ENCODE measurements at regions of chr14 and their contacts with region 1.

Region 1: GRCh38 chr14:68444449-68445168 is 348.3 kb downstream of the ZFP36L1 start:
- DNase-seq: peak; percentile 64
- ATAC-seq: peak; percentile 44
- H3K4me3 ChIP-seq: no peak overlapping the region
- H3K27ac ChIP-seq: no peak overlapping the region
- H3K4me1 ChIP-seq: peaks cover 42% of the 10 kb centered on the region
- H3K27me3 ChIP-seq: no peaks in the 10 kb centered on the region
- CTCF ChIP-seq: no peak

Region 2: GRCh38 chr14:68408680-68409079 is 35.9 kb before region 1 on chr14:
- CTCF ChIA-PET with region 1: no interaction called
- POLR2A ChIA-PET with region 1: no interaction called
- intact Hi-C with region 1: loop called (anchors 1 kb)
- DNase-seq: peak; percentile 63
- ATAC-seq: peak; percentile 59
- H3K4me3 ChIP-seq: no peak overlapping the region
- H3K27ac ChIP-seq: peak overlapping the region; percentile 22; the same call in 1 of the 2 replicates
- H3K4me1 ChIP-seq: peaks cover 56% of the 10 kb centered on the region
- H3K27me3 ChIP-seq: no peaks in the 10 kb centered on the region
- CTCF ChIP-seq: peak; percentile 63

Region 3: DNA sequence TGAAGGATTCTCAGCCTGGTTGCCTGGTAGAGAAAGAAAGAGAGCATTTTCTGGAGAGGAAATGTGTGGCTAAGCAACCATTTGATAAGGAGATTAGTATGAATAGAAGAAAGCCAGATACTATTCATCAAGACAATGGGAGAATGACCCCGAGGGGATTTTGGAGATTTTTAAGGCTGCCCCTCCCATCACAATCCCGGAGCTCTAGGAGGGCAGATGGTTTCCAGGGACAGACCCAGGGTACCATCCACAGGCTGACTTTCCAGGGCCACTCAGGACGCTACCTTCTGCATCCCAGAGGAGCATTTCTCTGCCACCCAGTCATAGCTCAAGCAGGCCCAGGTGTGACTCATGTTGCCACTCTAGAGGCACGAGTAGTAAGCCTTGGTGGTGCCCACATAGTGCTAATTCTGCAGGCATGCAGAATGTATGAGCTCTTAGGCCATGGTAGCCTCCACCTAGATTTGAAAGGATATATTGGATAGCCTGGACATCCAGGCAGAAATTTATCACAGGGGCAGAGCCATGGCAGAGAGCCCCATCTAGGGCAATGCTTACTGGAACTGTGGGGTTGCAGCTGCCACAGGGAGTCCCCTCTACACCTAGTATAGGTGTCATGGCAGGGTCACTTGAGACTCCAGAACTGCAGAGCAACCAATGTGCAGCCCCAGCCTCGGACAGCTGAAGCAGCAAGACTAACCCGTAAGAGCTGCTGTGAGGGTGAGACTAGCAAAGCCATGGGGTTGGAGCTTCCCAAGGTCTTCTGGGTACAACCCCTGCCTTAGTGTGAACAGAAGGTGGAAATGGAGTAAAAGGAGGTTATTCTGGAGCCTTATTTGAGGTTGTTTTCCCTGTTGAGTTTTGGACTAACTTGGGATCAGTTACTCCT is 17.7 kb before region 1 on chr14:
- CTCF ChIA-PET with region 1: no interaction called
- POLR2A ChIA-PET with region 1: interaction called, 6 read pairs
- intact Hi-C with region 1: loop called (anchors 1 kb)
- DNase-seq: peak; percentile 45
- ATAC-seq: peak; percentile 58
- H3K4me3 ChIP-seq: no peak overlapping the region
- H3K27ac ChIP-seq: peak overlapping the region; percentile 78
- H3K4me1 ChIP-seq: peaks cover 17% of the 10 kb centered on the region
- H3K27me3 ChIP-seq: no peaks in the 10 kb centered on the region
- CTCF ChIP-seq: no peak

Region 4: GRCh38 chr14:68458840-68459469 is 14.3 kb after region 1 on chr14:
- CTCF ChIA-PET with region 1: no interaction called
- POLR2A ChIA-PET with region 1: interaction called, 3 read pairs
- intact Hi-C with region 1: loop called (anchors 1 kb)
- DNase-seq: peak; percentile 70
- ATAC-seq: peak; percentile 70
- H3K4me3 ChIP-seq: no peak overlapping the region; the same call in 1 of the 2 replicates
- H3K27ac ChIP-seq: peak overlapping the region; percentile 57
- H3K4me1 ChIP-seq: peaks cover 17% of the 10 kb centered on the region
- H3K27me3 ChIP-seq: no peaks in the 10 kb centered on the region
- CTCF ChIP-seq: no peak

Region 5: GRCh38 chr14:68598621-68599447 is 154.2 kb after region 1 on chr14:
- CTCF ChIA-PET with region 1: no interaction called
- POLR2A ChIA-PET with region 1: no interaction called
- intact Hi-C with region 1: loop called (anchors 2 kb)
- DNase-seq: peak; percentile 97
- ATAC-seq: peak; percentile 92
- H3K4me3 ChIP-seq: peak overlapping the region; percentile 60
- H3K27ac ChIP-seq: peak overlapping the region; percentile 99
- H3K4me1 ChIP-seq: peaks cover 27% of the 10 kb centered on the region
- H3K27me3 ChIP-seq: no peaks in the 10 kb centered on the region
- CTCF ChIP-seq: no peak

Region 6: GRCh38 chr14:68780358-68781160 is 335.9 kb after region 1 on chr14:
- CTCF ChIA-PET with region 1: no interaction called
- POLR2A ChIA-PET with region 1: interaction called, 3 read pairs
- intact Hi-C with region 1: loop called (anchors 2 kb)
- DNase-seq: peak; percentile 43
- ATAC-seq: peak; percentile 20
- H3K4me3 ChIP-seq: peak overlapping the region; percentile 32
- H3K27ac ChIP-seq: peak overlapping the region; percentile 80
- H3K4me1 ChIP-seq: peaks cover 60% of the 10 kb centered on the region
- H3K27me3 ChIP-seq: no peaks in the 10 kb centered on the region
- CTCF ChIP-seq: no peak

Measured in PC-3 (cell line).